AG04449 (cell line): ENCODE measurements at regions of chr12 and their contacts with region 1.

Region 1: GRCh38 chr12:40032433-40033241 is 73.2 kb downstream of the SLC2A13 start:
- DNase-seq: no peak
- H3K4me3 ChIP-seq: no peak overlapping the region
- CTCF ChIP-seq: no peak

Region 2: GRCh38 chr12:40010899-40011774 is 21.5 kb before region 1 on chr12:
- CTCF ChIA-PET with region 1: interaction called, 16 read pairs
- POLR2A ChIA-PET with region 1: no interaction called
- DNase-seq: peak; percentile 19
- H3K4me3 ChIP-seq: no peak overlapping the region; the same call in 1 of the 2 replicates
- CTCF ChIP-seq: peak; percentile 66